ENCODE measurements at regions of chr6 and their contacts with region 1.

Region 1: DNA sequence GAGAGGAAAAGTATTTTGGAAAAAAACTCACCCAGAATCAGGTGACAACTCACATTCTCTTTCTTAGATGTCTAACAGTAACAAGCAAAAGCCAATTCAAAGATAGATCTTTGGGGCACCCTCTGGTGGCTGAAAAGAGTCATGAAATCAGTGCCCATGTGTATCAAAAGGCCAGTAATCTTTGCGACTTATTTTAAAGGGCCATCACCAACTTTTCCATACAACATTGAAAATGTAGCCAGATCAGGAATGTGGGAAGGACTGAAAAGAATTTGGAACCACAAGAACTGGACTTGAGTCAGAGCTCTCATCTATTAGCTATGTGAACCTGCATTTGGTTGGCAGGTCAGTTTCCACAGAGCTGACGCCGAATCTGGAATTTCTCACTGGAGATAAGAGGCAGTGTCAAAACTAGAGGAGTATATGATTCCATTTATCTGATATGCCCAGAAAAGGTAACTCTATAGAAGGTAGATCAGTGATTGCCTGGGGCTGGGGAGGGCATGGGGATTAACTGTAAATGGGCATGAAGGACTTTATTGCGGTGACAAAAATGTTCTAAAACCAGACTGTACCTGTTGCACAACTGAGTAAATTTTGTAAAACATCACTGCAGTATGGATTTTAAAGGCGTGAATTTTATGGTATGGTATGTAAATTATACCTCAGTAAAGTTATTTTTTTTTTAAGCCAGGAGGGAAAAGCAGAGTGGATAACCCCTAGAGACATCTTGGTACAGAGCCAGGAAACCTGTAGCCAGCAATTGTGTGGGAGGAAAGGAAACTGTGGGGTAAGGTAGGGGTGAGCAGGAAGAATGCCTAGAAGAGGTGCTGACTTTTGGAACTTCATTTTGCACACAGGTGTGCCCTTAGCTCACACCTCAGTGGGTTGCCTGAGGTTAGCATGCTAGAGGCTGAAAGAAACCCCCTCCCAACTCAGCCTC is 117.1 kb upstream of the ASF1A start:
- DNase-seq: peak in 1 of 2 donors; percentile 72
- ATAC-seq: peak in 7 of 8 donors; percentile 59 to 92 (median 73)
- H3K4me3 ChIP-seq: peak overlapping the region in 4 of 10 donors; percentile 20 to 29 (median 28)
- H3K27ac ChIP-seq: no peak overlapping the region
- H3K4me1 ChIP-seq: peaks cover 0 to 26% (median 13%) of the 10 kb centered on the region in 9 donors
- H3K27me3 ChIP-seq: no peaks in the 10 kb centered on the region
- CTCF ChIP-seq: peak; percentile 55 to 87 (median 78)

Region 2: GRCh38 chr6:118565311-118565960 is 211.4 kb before region 1 on chr6:
- intact Hi-C with region 1: loop called in 2 of 10 experiments (anchors 10 kb)
- DNase-seq: no peak
- ATAC-seq: peak in 5 of 8 donors; percentile 34 to 52 (median 37)
- H3K4me3 ChIP-seq: no peak overlapping the region
- H3K27ac ChIP-seq: no peak overlapping the region
- H3K4me1 ChIP-seq: peaks cover 0 to 16% (median 8%) of the 10 kb centered on the region in 9 donors
- H3K27me3 ChIP-seq: no peaks in the 10 kb centered on the region
- CTCF ChIP-seq: peak; percentile 4 to 56 (median 33)

Region 3: DNA sequence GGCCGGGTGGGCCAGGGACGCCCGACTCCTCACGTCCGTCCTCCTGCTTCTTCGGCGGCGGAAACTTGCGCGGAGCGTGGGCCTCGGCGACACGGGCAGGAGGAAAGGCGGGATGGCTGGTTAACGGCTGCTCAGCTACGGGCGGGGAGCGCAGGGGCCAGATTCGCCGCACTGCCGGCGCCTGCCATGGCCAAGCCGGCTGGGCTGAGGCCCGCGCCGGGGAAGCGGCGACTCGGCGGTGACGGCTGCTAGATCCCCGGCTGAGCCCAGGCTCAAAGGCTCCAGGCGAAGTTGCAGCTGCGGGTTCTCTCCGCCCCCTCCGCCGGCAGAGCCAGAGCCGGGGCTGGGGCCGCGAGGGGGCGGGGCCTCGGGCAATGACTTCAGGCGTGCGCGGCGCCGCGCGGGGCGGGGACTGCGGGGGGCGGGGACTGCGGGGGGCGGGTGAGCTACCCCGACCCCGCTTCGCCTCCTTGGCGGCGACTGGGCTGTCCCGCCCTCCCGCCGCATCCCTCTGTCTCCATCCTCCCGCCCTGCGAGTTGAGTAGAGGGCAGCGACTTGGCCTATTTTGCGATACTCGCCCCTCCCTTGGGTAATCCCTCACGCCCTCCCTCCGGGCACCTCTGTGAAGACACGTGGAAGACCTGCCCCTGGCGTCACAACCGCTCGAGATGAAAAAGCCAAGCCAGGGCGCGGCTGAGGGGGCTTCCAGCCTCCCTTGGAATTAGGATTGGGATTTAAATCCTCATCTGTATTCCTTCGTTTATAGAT is 125.4 kb before region 1 on chr6 and contains the start of gene CEP85L:
- intact Hi-C with region 1: loop called in 8 of 10 experiments (anchors 5 to 10 kb)
- DNase-seq: peak; percentile 91 to 94
- ATAC-seq: peak; percentile 97 to 99 (median 98)
- H3K4me3 ChIP-seq: peak within 1 kb of the TSS; percentile 71 to 98 (median 91)
- H3K27ac ChIP-seq: peak within 1 kb of the TSS; percentile 89 to 99 (median 97)
- H3K4me1 ChIP-seq: peaks cover 0 to 25% (median 21%) of the 10 kb centered on the region in 9 donors
- H3K27me3 ChIP-seq: no peaks in the 10 kb centered on the region
- CTCF ChIP-seq: peak in 1 of 9 donors; percentile 3
- total RNA-seq, gene CEP85L: 5.4 to 19.2 (median 8.1) TPM